Heart left ventricle (tissue), 16 donors: ENCODE measurements at regions of chr15 and their contacts with region 1.

Region 1: GRCh38 chr15:42056934-42057779 is 36.3 kb upstream of the PLA2G4E start:
- DNase-seq: peak; percentile 75 to 89 (median 88)
- ATAC-seq: peak; percentile 87 to 97 (median 94)
- H3K4me3 ChIP-seq: peak overlapping the region in 8 of 12 donors; percentile 4 to 37 (median 34)
- H3K27ac ChIP-seq: no peak overlapping the region
- H3K4me1 ChIP-seq: peaks cover 0 to 15% (median 5%) of the 10 kb centered on the region in 12 donors
- H3K27me3 ChIP-seq: peaks cover 0 to 3% (median 0%) of the 10 kb centered on the region in 9 donors
- CTCF ChIP-seq: peak; percentile 58 to 84 (median 70)
- POLR2A ChIP-seq: no peak

Region 2: DNA sequence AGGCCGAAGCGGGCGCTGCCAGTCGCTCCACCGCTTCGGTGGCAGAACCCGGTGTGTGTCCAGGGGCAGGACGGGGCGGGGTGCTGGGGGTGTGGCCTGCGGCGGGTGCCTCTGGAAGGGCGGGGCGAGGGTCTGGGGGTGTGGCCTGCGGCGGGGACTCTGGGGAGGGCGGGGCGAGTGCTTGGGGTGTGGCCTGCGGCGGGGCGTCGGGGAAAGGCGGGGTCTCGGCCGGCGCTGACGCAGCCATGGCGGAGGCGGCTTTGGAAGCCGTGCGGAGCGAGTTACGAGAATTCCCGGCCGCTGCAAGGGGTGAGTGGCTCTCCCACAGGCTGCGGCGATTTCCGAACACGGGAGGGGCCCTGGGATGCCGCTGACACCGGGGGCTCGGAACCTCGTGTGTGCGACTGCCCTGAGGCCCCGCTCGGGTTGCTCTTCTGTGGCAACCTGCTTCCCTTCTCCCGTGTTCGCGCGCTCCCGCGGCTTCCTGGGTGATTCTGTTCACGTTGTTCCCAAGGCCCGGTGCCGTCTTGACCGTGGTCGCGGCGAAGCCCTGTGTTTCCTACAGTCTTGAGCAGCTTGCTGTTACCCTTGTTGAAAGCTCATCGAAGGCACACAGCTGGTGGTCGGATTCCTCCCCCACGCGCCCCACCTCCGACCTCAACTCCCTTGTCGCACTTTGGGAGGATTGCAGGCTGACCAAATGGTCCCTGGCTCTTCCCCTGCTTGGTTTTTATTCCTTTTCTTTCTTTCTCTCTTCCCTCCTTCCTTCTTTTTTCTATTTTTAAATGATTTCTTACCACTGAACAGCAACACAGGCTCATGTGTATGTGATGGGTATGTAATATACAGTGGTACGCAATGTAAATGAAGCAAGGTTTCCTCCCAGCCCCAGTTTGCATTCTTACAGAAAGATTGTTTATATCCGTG is 229.0 kb before region 1 on chr15 and contains the start of gene JMJD7:
- intact Hi-C with region 1: loop called in 1 of 10 experiments (anchors 10 kb)
- DNase-seq: peak; percentile 96 to 98 (median 96)
- ATAC-seq: peak; percentile 94 to 97 (median 96)
- H3K4me3 ChIP-seq: peak within 1 kb of the TSS; percentile 52 to 88 (median 76)
- H3K27ac ChIP-seq: peak within 1 kb of the TSS; percentile 22 to 89 (median 84)
- H3K4me1 ChIP-seq: peaks cover 0 to 26% (median 16%) of the 10 kb centered on the region in 12 donors
- H3K27me3 ChIP-seq: no peaks in the 10 kb centered on the region
- CTCF ChIP-seq: no peak
- POLR2A ChIP-seq: peak in 1 of 2 donors; percentile 85
- total RNA-seq, gene JMJD7: 5.4 to 17.9 (median 11.8) TPM

Region 3: GRCh38 chr15:41904541-41905005 is 152.6 kb before region 1 on chr15:
- intact Hi-C with region 1: loop called in 3 of 10 experiments (anchors 10 kb)
- DNase-seq: peak in 4 of 5 donors; percentile 63 to 67 (median 65)
- ATAC-seq: peak; percentile 48 to 75 (median 64)
- H3K4me3 ChIP-seq: no peak overlapping the region
- H3K27ac ChIP-seq: peak overlapping the region in 9 of 12 donors; percentile 20 to 67 (median 42)
- H3K4me1 ChIP-seq: peaks cover 0 to 40% (median 21%) of the 10 kb centered on the region in 12 donors
- H3K27me3 ChIP-seq: no peaks in the 10 kb centered on the region
- CTCF ChIP-seq: peak; percentile 78 to 89 (median 83)
- POLR2A ChIP-seq: no peak

Region 4: DNA sequence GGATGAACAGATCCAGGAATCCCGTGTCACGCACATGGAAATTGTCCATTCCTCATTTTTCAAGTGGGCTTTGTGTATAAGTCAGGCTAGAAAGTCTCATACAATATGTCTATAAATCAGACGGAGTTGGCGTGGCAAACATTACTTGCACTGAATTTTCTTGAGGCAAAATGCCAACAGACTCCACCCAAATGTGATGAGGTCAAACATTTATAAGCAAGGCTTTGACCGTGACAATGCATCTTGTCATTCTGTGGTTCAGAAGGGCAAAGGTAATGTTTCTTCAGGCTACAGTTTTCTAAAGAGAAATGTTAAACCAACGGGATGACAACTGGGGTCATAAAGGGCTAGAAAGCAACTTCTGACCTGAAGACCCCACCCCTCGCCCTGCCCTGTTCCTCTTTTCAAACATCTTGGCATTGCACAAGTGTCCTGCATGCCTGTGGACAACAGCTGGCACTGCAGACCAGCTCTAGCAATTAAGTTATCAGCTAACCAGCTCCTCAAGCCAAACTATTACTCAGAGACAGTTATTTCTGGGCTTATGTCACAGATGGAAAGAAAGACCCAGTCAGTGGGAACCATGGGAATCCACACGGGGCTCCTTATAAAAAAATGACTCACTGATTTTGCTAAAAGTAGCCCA is 126.8 kb before region 1 on chr15:
- intact Hi-C with region 1: loop called in 1 of 10 experiments (anchors 10 kb)
- DNase-seq: peak in 2 of 5 donors; percentile 80 to 84
- ATAC-seq: peak; percentile 20 to 76 (median 55)
- H3K4me3 ChIP-seq: no peak overlapping the region
- H3K27ac ChIP-seq: peak overlapping the region in 11 of 12 donors; percentile 65 to 87 (median 78)
- H3K4me1 ChIP-seq: peaks cover 49 to 100% (median 94%) of the 10 kb centered on the region in 12 donors
- H3K27me3 ChIP-seq: no peaks in the 10 kb centered on the region
- CTCF ChIP-seq: peak in 9 of 12 donors; percentile 12 to 52 (median 25)
- POLR2A ChIP-seq: no peak

Region 5: GRCh38 chr15:42203891-42204290 is 146.7 kb after region 1 on chr15:
- intact Hi-C with region 1: no loop called
- DNase-seq: no peak
- ATAC-seq: no peak
- H3K4me3 ChIP-seq: no peak overlapping the region
- H3K27ac ChIP-seq: no peak overlapping the region
- H3K4me1 ChIP-seq: peaks cover 0 to 35% (median 18%) of the 10 kb centered on the region in 12 donors
- H3K27me3 ChIP-seq: no peaks in the 10 kb centered on the region
- CTCF ChIP-seq: no peak
- POLR2A ChIP-seq: no peak

Region 6: GRCh38 chr15:42324308-42324707 is 267.2 kb after region 1 on chr15:
- intact Hi-C with region 1: no loop called
- DNase-seq: no peak
- ATAC-seq: no peak
- H3K4me3 ChIP-seq: no peak overlapping the region
- H3K27ac ChIP-seq: no peak overlapping the region
- H3K4me1 ChIP-seq: no peaks in the 10 kb centered on the region
- H3K27me3 ChIP-seq: no peaks in the 10 kb centered on the region
- CTCF ChIP-seq: no peak
- POLR2A ChIP-seq: no peak

Region 7: GRCh38 chr15:42474827-42475226 is 417.7 kb after region 1 on chr15:
- intact Hi-C with region 1: loop called in 2 of 10 experiments (anchors 10 kb)
- DNase-seq: no peak
- ATAC-seq: no peak
- H3K4me3 ChIP-seq: no peak overlapping the region
- H3K27ac ChIP-seq: peak overlapping the region in 1 of 12 donors; percentile 50
- H3K4me1 ChIP-seq: peaks cover 0 to 33% (median 8%) of the 10 kb centered on the region in 12 donors
- H3K27me3 ChIP-seq: no peaks in the 10 kb centered on the region
- CTCF ChIP-seq: no peak
- POLR2A ChIP-seq: no peak